Vagina (tissue), 2 donors: ENCODE measurements at regions of chr12 and their contacts with region 1.

Region 1: GRCh38 chr12:93419388-93420034 is 22.2 kb downstream of the UBE2N start:
- DNase-seq: no peak
- H3K4me3 ChIP-seq: no peak overlapping the region
- H3K27ac ChIP-seq: no peak overlapping the region
- H3K4me1 ChIP-seq: peaks cover 32% of the 10 kb centered on the region
- H3K27me3 ChIP-seq: no peaks in the 10 kb centered on the region
- CTCF ChIP-seq: peak in 2 of 3 experiments; percentile 37 to 64
- POLR2A ChIP-seq: no peak

Region 2: DNA sequence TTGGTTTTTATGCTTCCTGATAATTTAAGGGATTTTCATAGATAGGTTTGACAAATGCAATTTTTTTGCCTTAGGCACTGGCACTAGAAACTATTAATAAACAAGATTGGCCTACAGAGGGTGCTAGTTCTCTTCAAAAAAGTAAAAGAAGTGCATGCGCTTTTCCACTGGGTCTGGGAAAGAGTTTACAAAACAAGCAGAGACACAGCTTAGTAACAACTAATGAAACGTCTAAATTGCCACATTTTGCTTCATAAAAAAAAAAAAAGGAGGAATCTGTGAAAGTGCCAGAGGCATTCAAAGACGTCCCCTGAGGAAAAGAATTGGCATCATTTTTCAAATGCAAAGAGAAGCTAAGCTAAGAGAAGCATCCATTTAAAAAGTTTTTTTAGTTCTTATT is 432.1 kb before region 1 on chr12:
- intact Hi-C with region 1: loop called (anchors 5 kb)
- DNase-seq: no peak
- H3K4me3 ChIP-seq: no peak overlapping the region
- H3K27ac ChIP-seq: no peak overlapping the region
- H3K4me1 ChIP-seq: peaks cover 5% of the 10 kb centered on the region
- H3K27me3 ChIP-seq: no peaks in the 10 kb centered on the region
- CTCF ChIP-seq: peak; percentile 42 to 64 (median 50)
- POLR2A ChIP-seq: no peak

Region 3: DNA sequence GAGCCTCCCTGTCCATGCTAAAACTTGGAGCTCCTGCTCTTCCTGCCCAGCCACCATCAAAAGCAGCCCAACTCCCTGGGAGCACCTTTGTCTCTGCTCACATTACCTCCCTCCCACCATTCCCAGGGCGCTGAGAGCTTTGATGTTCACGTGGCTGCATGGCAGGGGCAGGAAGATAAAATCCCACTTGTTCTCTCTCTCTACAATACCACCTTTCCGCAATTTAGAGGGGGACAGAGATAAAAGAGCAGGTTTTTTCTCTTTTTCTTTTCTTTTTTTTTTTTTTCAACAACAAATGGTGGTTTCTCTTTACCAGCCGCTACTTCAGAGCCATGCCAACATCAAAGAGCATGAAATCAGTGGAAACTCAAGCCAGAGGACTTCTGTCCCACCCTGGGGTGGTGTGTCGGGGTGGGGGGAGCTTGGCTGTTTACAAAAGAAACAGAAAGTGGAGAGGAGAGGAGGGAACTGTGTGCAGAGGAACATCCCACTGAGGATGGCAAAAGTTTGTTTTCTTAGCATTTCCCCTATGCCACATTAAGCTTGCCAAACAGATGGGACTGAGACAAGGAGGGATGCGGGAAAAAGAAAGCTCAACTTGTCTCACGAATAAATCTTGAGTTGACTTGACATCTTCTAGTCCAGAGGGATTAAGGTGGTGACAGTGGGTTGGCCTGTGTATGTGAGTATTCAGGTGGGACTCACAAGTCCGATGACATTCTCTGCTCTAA is 145.5 kb before region 1 on chr12:
- intact Hi-C with region 1: no loop called
- DNase-seq: no peak
- H3K4me3 ChIP-seq: no peak overlapping the region
- H3K27ac ChIP-seq: no peak overlapping the region
- H3K4me1 ChIP-seq: no peaks in the 10 kb centered on the region
- H3K27me3 ChIP-seq: no peaks in the 10 kb centered on the region
- CTCF ChIP-seq: no peak
- POLR2A ChIP-seq: no peak